ENCODE measurements at regions of chr16 and their contacts with region 1.

Region 1: DNA sequence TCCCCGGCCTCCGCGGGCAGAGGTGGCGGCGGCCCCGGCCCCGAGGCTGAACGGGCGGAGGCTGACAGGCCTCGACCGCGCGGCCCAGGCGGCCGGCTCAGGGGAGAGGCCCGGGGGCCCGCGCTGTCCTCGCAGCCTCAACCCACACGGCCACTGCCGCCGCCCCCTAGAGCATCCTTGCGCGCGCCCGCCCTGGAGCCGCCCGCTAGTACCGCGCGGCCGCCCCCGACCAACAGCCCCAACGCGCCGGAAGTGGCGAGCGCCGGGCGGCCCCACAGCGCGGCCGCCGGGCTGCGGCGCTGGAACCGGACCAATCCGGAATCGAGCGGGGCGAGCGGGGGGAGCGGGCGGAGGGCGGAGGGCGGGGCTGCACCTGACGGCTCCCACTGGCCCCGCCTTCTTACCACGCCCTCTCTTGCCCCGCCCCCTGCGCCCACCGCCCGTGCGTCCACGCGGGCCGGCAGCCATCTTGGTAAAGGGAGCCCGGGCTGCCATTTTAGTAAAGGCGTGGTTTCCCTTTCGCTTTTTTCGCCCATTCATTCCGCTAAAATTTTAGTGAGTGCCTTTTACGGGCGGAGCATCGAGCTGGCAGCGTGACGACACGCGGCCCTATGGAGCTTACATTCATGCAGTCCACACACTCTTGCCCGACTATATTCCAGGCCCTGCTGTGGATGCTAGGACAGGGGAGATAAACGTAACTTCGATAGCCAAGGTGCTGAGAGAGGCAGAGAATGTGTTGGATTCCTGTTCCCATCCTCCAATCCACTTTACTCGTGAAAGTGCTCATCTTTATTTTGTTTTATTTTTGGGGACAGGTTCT is at the start of gene XPO6:
- DNase-seq: peak; percentile 94
- ATAC-seq: peak; percentile 90 to 91
- H3K4me3 ChIP-seq: peak within 1 kb of the TSS; percentile 65 to 85 (median 76)
- H3K27ac ChIP-seq: peak within 1 kb of the TSS; percentile 87 to 90 (median 89)
- H3K4me1 ChIP-seq: peaks cover 15 to 19% of the 10 kb centered on the region in 2 donors
- H3K27me3 ChIP-seq: no peaks in the 10 kb centered on the region
- CTCF ChIP-seq: no peak
- POLR2A ChIP-seq: peak; percentile 82 to 88
- total RNA-seq, gene XPO6: 20.9 to 40.1 (median 29.6) TPM

Region 2: DNA sequence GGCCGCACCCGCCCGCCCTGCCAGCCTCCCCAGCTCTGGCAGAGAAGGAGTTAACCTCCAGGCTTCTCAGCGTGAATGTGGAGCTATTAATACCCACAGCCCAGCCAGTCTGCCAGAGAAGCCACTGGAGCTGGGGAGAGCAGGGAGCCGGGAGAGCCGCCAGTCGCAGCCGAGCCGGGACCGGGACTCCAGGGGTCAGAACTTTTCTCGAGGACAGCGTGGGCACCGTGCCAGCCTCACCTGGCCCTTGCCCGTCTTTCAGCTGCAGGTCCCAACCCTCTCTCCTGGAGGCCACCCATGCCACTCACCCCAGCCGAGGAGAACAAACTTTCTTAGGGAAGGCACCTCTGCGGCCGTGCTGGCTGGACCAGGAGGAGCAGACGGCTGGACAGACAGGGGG is 46.6 kb after region 1 on chr16:
- in situ Hi-C with region 1: no loop called
- intact Hi-C with region 1: loop called (anchors 1 kb)
- DNase-seq: peak; percentile 77 to 96
- ATAC-seq: peak; percentile 69 to 80
- H3K4me3 ChIP-seq: peak overlapping the region; percentile 58 to 68 (median 61)
- H3K27ac ChIP-seq: peak overlapping the region; percentile 93 to 98 (median 96)
- H3K4me1 ChIP-seq: peaks cover 35 to 42% of the 10 kb centered on the region in 2 donors
- H3K27me3 ChIP-seq: no peaks in the 10 kb centered on the region
- CTCF ChIP-seq: no peak
- POLR2A ChIP-seq: peak; percentile 85 to 90

Region 3: DNA sequence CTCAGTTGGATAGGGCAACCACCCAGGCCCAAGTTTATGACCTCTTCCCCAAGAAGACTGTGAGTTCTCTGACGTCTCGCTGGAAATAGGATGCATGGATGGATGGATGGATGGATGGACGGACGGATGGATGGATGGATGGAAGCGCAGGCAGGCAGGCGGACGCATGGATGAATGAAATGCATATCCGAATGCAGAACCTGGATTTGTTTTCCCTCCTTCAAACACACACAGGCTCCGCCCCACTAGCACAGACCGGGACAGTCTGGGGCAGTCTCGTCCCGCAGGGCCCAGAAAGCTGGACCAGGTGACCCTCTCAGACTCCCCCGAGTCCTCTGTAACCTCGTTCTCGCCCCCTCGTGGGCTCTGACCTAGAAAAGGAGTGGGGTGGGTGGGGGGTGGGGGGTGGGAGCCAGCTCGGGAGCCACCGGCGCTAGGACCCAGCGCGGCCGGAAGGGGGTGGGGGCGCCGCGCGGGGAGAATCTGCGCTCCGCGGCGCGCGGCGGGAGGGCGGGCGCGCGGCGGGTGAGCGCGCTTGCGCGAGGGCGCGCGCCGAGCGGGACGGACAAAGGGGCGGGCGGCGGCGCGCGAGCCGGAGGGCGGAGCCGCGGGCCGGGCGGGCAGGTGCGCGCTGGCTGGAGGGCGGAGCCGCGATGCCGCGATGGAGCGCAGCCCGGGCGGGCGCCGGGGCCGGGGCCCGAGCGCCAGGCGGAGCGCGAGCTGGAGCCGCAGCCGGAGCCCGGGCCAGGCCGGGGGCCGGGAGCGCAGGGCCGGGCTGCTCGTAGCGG is 80.1 kb after region 1 on chr16 and contains the start of gene SBK1:
- in situ Hi-C with region 1: no loop called
- intact Hi-C with region 1: loop called (anchors 10 kb)
- DNase-seq: peak; percentile 28 to 56
- ATAC-seq: peak; percentile 82 to 86
- H3K4me3 ChIP-seq: peak within 1 kb of the TSS; percentile 59 to 72 (median 63)
- H3K27ac ChIP-seq: peak within 1 kb of the TSS; percentile 76 to 83 (median 81)
- H3K4me1 ChIP-seq: peaks cover 39 to 46% of the 10 kb centered on the region in 2 donors
- H3K27me3 ChIP-seq: no peaks in the 10 kb centered on the region
- CTCF ChIP-seq: no peak
- POLR2A ChIP-seq: peak in 1 of 2 donors; percentile 41
- total RNA-seq, gene SBK1: 1.8 to 6.4 (median 4.5) TPM

Region 4: DNA sequence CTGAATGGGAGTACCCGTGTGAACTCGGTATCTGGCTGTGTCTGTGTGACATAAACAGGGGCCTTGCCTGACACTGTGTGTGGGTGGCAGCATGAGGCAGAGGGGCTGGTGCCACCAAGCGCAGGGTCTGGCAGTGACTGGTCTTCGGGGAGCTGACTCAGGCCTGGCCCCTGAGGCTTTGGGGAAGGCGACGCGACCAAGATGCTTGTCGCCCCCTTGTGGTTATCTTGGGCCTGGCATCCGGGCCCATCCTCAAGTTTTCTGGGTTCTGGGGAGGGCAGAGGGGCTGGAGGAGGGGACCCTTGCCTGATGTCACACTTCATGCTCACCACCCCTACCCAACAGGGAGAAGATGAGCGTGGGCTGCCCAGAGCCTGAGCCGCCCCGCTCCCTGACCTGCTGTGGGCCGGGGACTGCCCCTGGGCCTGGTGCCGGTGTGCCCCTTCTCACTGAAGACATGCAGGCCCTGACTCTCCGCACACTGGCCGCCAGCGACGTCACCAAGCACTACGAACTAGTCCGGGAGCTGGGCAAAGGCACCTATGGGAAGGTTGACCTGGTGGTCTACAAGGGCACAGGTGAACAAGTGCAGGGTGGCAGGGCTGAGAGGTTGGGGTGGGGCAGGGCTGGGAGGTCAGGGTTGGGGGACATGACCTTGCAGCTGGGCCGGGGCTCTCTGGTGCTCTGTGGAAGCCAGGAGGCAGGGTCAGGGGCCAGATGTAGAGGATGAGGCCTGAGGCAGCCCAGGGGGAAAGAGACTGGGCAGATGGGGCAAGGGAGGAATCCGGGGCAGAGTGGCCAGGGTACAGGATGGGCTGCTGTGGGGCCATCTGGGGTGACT is 105.3 kb after region 1 on chr16:
- in situ Hi-C with region 1: no loop called
- intact Hi-C with region 1: no loop called
- DNase-seq: peak in 1 of 2 donors; percentile 53
- ATAC-seq: peak; percentile 58 to 79
- H3K4me3 ChIP-seq: no peak overlapping the region
- H3K27ac ChIP-seq: peak overlapping the region; percentile 36 to 78 (median 52)
- H3K4me1 ChIP-seq: peaks cover 0 to 4% of the 10 kb centered on the region in 2 donors
- H3K27me3 ChIP-seq: no peaks in the 10 kb centered on the region
- CTCF ChIP-seq: peak; percentile 81 to 91 (median 88)
- POLR2A ChIP-seq: no peak

Region 5: DNA sequence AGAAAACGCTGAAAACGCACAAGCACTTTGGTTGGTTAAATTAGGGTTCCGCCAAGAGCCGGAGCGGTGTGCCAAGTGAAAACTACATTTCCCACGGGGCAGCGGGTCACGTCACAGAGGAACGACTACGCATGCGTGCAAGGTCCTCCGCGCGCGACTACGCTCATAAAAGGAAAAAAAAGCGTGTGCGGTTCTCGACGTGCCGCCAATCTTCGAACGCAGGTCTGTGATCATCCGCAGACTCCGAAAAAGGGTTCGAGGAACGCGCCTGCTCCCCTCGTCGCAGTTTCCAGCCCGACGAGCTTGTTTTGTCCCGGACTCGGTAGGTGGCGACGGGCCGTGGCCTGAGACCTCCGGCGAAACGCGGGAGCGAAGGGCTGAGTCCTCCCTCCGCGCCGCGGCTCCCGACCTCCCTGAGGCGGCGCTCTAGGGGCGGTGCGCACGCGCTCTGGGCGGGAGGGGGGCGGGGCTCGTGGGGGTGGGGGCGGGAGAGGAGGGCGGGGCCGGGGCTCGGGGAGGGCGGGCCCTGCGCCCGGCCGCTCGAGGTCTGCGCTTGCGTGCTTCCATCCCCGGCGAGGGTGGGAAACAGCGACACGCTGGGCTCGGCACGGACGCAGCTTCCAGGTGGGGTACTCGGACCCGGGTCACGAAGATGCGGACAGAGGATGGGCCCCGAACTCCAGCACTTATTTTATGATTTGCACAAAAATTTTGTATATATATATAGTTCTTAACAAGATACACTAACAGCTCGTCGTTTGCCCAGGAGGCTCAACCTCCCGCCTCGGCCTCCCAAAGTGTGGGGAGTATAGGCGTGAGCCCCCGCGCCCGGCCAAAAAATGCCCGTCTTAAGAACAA is 342.1 kb after region 1 on chr16 and contains the start of gene SGF29:
- in situ Hi-C with region 1: no loop called
- intact Hi-C with region 1: loop called (anchors 10 kb)
- DNase-seq: peak; percentile 87 to 91
- ATAC-seq: peak; percentile 97 to 98
- H3K4me3 ChIP-seq: peak within 1 kb of the TSS; percentile 66 to 71 (median 70)
- H3K27ac ChIP-seq: peak within 1 kb of the TSS; percentile 92 to 94 (median 94)
- H3K4me1 ChIP-seq: peaks cover 12 to 15% of the 10 kb centered on the region in 2 donors
- H3K27me3 ChIP-seq: no peaks in the 10 kb centered on the region
- CTCF ChIP-seq: peak in 4 of 5 experiments; percentile 16 to 42 (median 30)
- POLR2A ChIP-seq: peak; percentile 89 to 96
- total RNA-seq, gene SGF29: 35.1 to 50.4 (median 41.9) TPM

Region 6: DNA sequence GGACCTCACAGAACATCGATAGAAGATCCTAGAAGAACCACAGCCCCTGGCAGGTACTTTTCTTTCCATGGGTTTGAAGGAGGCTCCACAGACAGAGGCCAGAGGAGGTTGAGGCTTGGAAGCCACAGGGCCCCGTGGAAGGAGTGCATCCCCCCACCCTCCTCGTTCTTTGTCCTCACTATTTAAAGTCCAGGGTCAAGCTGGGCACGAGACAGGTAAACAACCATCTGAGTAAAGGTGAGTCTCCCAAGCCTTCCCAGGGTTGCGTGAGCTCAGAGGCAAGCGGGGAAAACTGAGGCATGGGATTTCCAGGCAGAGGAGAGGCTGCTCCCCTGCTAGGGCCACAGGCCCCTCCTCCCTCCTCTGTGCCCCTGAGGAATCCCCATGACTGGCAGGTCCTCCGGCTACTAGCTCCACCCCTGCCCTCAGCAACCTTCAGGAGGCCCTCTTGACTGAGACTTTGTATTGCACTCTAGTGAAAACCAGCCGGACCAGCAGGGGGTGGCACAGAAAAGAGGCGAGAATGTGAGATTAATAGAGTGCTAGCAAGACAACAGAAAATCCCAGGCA is 385.9 kb after region 1 on chr16:
- in situ Hi-C with region 1: no loop called
- intact Hi-C with region 1: no loop called
- DNase-seq: no peak
- ATAC-seq: no peak
- H3K4me3 ChIP-seq: no peak overlapping the region
- H3K27ac ChIP-seq: no peak overlapping the region
- H3K4me1 ChIP-seq: peaks cover 0 to 10% of the 10 kb centered on the region in 2 donors
- H3K27me3 ChIP-seq: peaks cover 0 to 4% (median 0%) of the 10 kb centered on the region in 3 donors
- CTCF ChIP-seq: no peak
- POLR2A ChIP-seq: no peak

Measured in gastrocnemius medialis (tissue), 4 donors.